MCF 10A (cell line): ENCODE measurements at regions of chr14 and their contacts with region 1.

Region 1: GRCh38 chr14:72643317-72643801 is 250.5 kb downstream of the DPF3 start:
- DNase-seq: peak; percentile 92
- H3K4me3 Mint-ChIP-seq: no peak overlapping the region
- H3K27ac Mint-ChIP-seq: peak overlapping the region; percentile 65
- H3K4me1 Mint-ChIP-seq: peaks cover 16% of the 10 kb centered on the region
- H3K27me3 Mint-ChIP-seq: no peaks in the 10 kb centered on the region
- CTCF ChIP-seq: no peak

Region 2: GRCh38 chr14:71692496-71692895 is 950.9 kb before region 1 on chr14:
- CTCF ChIA-PET with region 1: no interaction called
- POLR2A ChIA-PET with region 1: no interaction called
- intact Hi-C with region 1: no loop called
- DNase-seq: peak; percentile 41
- H3K4me3 Mint-ChIP-seq: no peak overlapping the region
- H3K27ac Mint-ChIP-seq: no peak overlapping the region
- H3K4me1 Mint-ChIP-seq: peaks cover 5% of the 10 kb centered on the region
- H3K27me3 Mint-ChIP-seq: no peaks in the 10 kb centered on the region
- CTCF ChIP-seq: no peak

Region 3: GRCh38 chr14:72665259-72665658 is 21.9 kb after region 1 on chr14:
- CTCF ChIA-PET with region 1: no interaction called
- POLR2A ChIA-PET with region 1: interaction called, 3 read pairs
- intact Hi-C with region 1: loop called (anchors 2 kb)
- DNase-seq: peak; percentile 82
- H3K4me3 Mint-ChIP-seq: no peak overlapping the region
- H3K27ac Mint-ChIP-seq: peak overlapping the region; percentile 76
- H3K4me1 Mint-ChIP-seq: peaks cover 30% of the 10 kb centered on the region
- H3K27me3 Mint-ChIP-seq: no peaks in the 10 kb centered on the region
- CTCF ChIP-seq: no peak